PC-9 (cell line): ENCODE measurements at regions of chr4 and their contacts with region 1.

Region 1: GRCh38 chr4:101864660-101865059 is 74.1 kb downstream of the BANK1 start:
- DNase-seq: peak; percentile 35 to 39
- H3K4me3 ChIP-seq: no peak overlapping the region
- H3K27ac ChIP-seq: 0 out of 2 replicates have a peak overlapping the region, but pooled peaks have one; percentile 55
- H3K4me1 ChIP-seq: 0 out of 2 replicates have a peak, but pooled peaks cover 14% of the 10 kb centered on the region
- H3K27me3 ChIP-seq: no peaks in the 10 kb centered on the region
- CTCF ChIP-seq: no peak

Region 2: DNA sequence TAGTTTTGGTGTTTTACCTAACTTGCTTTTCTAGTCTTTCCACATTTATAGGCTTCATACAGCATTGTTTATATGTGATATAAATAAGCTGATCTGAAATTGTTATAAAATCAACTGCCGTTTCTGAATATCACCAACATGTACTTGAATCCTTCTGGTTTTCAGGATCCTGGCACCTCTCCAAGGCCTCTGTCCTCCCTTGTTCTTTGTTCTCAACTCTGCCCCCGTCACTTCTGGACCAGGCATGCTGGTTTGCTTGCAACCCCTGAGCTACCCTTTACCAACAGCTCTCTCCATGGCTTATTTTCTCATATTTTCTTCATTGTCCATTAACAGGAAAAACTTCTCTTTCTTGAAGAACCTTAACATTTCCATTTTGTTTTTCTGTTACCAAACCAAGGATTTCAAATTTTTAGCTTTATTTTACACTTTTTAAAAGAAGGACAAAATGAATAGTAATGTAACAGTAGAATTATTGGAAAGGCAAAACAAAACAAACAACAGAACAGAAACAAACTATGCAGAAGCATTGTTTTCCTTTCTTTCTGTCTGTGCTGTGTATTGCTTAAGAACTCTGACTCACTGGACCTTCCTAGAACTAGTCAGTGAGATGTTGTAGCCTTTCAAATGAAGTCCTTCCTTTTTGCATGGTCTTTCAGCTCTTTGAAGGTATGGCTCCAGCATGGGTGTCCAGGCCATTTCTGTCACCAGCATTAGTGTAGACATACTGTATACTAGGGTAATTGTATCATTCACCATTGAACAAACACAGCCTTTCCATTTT is 29.3 kb before region 1 on chr4:
- CTCF ChIA-PET with region 1: no interaction called
- POLR2A ChIA-PET with region 1: no interaction called
- intact Hi-C with region 1: loop called (anchors 1 kb)
- DNase-seq: peak; percentile 32 to 49
- H3K4me3 ChIP-seq: no peak overlapping the region
- H3K27ac ChIP-seq: no peak overlapping the region
- H3K4me1 ChIP-seq: peaks cover 7% of the 10 kb centered on the region; the same call in 1 of the 2 replicates
- H3K27me3 ChIP-seq: no peaks in the 10 kb centered on the region
- CTCF ChIP-seq: no peak